CD4-positive, alpha-beta memory T cell (primary cell): ENCODE measurements at regions of chr1 and their contacts with region 1.

Region 1: DNA sequence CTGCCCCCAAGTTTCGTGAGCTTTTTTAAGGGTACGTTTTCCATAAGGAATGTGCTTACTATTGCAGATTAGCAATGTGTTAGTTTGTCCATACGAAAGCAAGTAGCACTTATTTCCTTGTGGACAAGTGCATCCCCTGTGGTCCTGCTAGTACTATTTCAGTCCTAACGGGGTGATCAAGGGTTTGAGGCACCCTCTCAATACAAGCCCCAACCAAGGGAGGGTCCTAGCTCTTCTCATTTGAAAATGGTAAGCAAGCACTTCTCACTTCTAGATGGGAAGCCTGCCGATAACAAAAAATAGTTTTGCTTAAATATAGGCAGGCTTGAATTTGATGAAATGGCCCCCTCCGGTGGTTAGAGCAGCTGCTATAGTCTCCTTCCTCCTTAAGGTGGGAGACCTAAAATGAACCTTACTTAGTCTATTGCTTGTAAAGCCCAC is 64.0 kb upstream of the HMCN1 start:
- DNase-seq: peak; percentile 44 to 59 (median 57)
- H3K4me3 ChIP-seq: no peak overlapping the region
- H3K4me3 Mint-ChIP-seq: no peak overlapping the region
- H3K27ac ChIP-seq: no peak overlapping the region
- H3K27ac Mint-ChIP-seq: peak overlapping the region in 3 of 7 donors; percentile 3 to 31 (median 21)
- H3K4me1 ChIP-seq: peaks cover 14% of the 10 kb centered on the region
- H3K4me1 Mint-ChIP-seq: peaks cover 14 to 28% (median 20%) of the 10 kb centered on the region in 4 donors
- H3K27me3 ChIP-seq: no peaks in the 10 kb centered on the region
- H3K27me3 Mint-ChIP-seq: no peaks in the 10 kb centered on the region

Region 2: GRCh38 chr1:185170291-185170848 is 499.8 kb before region 1 on chr1:
- CTCF ChIA-PET with region 1: interaction called, 7 read pairs
- POLR2A ChIA-PET with region 1: no interaction called
- intact Hi-C with region 1: loop called (anchors 5 kb)
- DNase-seq: peak; percentile 41 to 51 (median 44)
- H3K4me3 ChIP-seq: no peak overlapping the region
- H3K4me3 Mint-ChIP-seq: peak overlapping the region in 1 of 8 donors; percentile 57
- H3K27ac ChIP-seq: no peak overlapping the region
- H3K27ac Mint-ChIP-seq: peak overlapping the region in 4 of 7 donors; percentile 37 to 55 (median 40)
- H3K4me1 ChIP-seq: no peaks in the 10 kb centered on the region
- H3K4me1 Mint-ChIP-seq: peaks cover 0 to 4% (median 2%) of the 10 kb centered on the region in 4 donors
- H3K27me3 ChIP-seq: no peaks in the 10 kb centered on the region
- H3K27me3 Mint-ChIP-seq: no peaks in the 10 kb centered on the region

Region 3: GRCh38 chr1:185297982-185298381 is 372.2 kb before region 1 on chr1:
- CTCF ChIA-PET with region 1: interaction called, 11 read pairs
- POLR2A ChIA-PET with region 1: no interaction called
- intact Hi-C with region 1: no loop called
- DNase-seq: no peak
- H3K4me3 ChIP-seq: no peak overlapping the region
- H3K4me3 Mint-ChIP-seq: no peak overlapping the region
- H3K27ac ChIP-seq: no peak overlapping the region
- H3K27ac Mint-ChIP-seq: peak overlapping the region in 4 of 7 donors; percentile 4 to 74 (median 26)
- H3K4me1 ChIP-seq: no peaks in the 10 kb centered on the region
- H3K4me1 Mint-ChIP-seq: peaks cover 7 to 18% (median 10%) of the 10 kb centered on the region in 4 donors
- H3K27me3 ChIP-seq: no peaks in the 10 kb centered on the region
- H3K27me3 Mint-ChIP-seq: no peaks in the 10 kb centered on the region

Region 4: DNA sequence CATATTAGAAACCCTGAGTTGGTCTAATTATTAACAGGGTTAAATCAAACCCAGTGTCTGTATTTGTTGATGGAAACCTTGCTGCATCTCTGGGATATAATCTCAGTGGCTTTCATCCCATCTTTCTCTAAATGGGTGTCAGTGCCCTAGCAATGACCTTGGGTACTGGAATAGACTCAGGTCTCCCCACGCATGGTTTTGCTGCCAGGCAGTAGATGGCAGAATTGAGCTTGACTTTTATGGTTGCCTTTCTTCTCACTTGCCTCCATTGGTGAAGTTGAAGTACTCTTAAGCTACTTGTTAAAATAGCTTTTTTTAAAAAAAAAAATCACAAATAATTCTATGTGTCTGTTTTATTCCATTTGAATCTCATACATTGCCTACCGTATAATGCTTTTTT is 17.9 kb before region 1 on chr1:
- CTCF ChIA-PET with region 1: interaction called, 17 read pairs
- POLR2A ChIA-PET with region 1: interaction called, 5 read pairs
- intact Hi-C with region 1: no loop called
- DNase-seq: peak in 1 of 5 donors; percentile 4
- H3K4me3 ChIP-seq: no peak overlapping the region
- H3K4me3 Mint-ChIP-seq: peak overlapping the region in 1 of 8 donors; percentile 46
- H3K27ac ChIP-seq: no peak overlapping the region
- H3K27ac Mint-ChIP-seq: no peak overlapping the region
- H3K4me1 ChIP-seq: peaks cover 6% of the 10 kb centered on the region
- H3K4me1 Mint-ChIP-seq: peaks cover 9 to 17% (median 10%) of the 10 kb centered on the region in 4 donors
- H3K27me3 ChIP-seq: no peaks in the 10 kb centered on the region
- H3K27me3 Mint-ChIP-seq: no peaks in the 10 kb centered on the region

Region 5: DNA sequence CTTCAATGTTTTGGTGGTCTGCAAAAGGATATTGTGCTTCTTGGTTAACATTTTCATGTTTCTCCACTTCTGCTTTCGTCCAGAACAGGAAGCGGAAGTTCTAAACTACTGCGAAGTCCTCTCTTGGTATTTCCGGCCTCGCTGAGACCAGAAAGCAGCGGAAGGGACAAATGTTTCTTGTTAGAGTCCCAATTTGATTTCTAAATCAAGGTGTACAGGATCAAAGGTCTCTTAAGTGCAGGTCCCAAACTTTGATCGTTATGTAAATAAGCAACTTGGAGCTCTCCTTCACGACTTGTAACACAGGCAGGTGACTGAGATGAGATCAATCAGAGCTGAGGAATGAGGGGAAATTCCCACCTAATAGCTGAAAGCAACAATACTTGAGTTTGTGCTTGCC is 23.9 kb after region 1 on chr1:
- CTCF ChIA-PET with region 1: interaction called, 12 read pairs
- POLR2A ChIA-PET with region 1: interaction called, 4 read pairs
- intact Hi-C with region 1: loop called (anchors 1 kb)
- DNase-seq: peak in 3 of 5 donors; percentile 12 to 24 (median 17)
- H3K4me3 ChIP-seq: peak overlapping the region; percentile 4 to 53
- H3K4me3 Mint-ChIP-seq: peak overlapping the region; percentile 80 to 91 (median 86)
- H3K27ac ChIP-seq: peak overlapping the region; percentile 40
- H3K27ac Mint-ChIP-seq: peak overlapping the region; percentile 84 to 94 (median 92)
- H3K4me1 ChIP-seq: peaks cover 20% of the 10 kb centered on the region
- H3K4me1 Mint-ChIP-seq: peaks cover 13 to 19% (median 16%) of the 10 kb centered on the region in 4 donors
- H3K27me3 ChIP-seq: no peaks in the 10 kb centered on the region
- H3K27me3 Mint-ChIP-seq: peaks cover 6 to 8% of the 10 kb centered on the region in 2 donors

Region 6: DNA sequence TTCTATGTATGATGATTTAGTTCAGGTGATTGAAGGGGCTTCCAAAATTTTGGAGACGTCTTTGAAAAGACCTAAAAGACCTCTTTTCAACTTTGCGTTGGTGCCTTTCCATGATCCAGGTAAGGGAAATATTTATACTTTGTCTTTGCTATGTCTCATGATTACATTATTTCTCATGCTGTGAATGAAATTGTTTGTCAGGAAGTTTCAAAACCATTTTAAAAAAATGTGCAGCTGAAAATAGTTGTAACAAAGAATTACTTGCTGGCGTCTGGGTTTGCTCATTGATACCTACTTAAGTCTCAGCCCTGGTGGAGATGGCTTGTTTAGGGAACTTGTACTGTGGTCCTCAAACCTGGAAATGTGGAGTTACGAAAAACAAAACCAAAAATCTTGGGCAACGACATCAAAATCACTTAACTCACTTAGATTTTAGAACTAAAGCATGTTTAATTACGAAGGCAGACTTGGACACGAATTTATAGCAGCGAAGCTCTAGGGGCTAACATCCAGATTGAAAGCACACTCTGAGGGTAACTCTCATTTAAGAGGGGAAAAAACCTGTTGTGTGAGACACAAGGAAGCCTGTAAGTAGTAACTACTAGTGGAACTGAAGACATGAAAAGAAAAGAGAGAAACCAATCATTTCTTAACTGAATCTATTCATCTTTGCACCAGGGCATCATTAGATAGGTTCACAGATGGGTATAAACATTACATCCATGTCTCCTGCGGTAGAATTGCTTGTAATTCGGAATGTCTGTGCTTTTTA is 64.9 kb after region 1 on chr1:
- CTCF ChIA-PET with region 1: no interaction called
- POLR2A ChIA-PET with region 1: no interaction called
- intact Hi-C with region 1: no loop called
- DNase-seq: no peak
- H3K4me3 ChIP-seq: no peak overlapping the region
- H3K4me3 Mint-ChIP-seq: peak overlapping the region; percentile 58 to 81 (median 64)
- H3K27ac ChIP-seq: no peak overlapping the region
- H3K27ac Mint-ChIP-seq: no peak overlapping the region
- H3K4me1 ChIP-seq: peaks cover 12% of the 10 kb centered on the region
- H3K4me1 Mint-ChIP-seq: peaks cover 13 to 19% (median 16%) of the 10 kb centered on the region in 4 donors
- H3K27me3 ChIP-seq: peaks cover 7% of the 10 kb centered on the region
- H3K27me3 Mint-ChIP-seq: peaks cover 47 to 50% of the 10 kb centered on the region in 2 donors